MCF 10A (cell line): ENCODE measurements at regions of chr4 and their contacts with region 1.

Region 1: DNA sequence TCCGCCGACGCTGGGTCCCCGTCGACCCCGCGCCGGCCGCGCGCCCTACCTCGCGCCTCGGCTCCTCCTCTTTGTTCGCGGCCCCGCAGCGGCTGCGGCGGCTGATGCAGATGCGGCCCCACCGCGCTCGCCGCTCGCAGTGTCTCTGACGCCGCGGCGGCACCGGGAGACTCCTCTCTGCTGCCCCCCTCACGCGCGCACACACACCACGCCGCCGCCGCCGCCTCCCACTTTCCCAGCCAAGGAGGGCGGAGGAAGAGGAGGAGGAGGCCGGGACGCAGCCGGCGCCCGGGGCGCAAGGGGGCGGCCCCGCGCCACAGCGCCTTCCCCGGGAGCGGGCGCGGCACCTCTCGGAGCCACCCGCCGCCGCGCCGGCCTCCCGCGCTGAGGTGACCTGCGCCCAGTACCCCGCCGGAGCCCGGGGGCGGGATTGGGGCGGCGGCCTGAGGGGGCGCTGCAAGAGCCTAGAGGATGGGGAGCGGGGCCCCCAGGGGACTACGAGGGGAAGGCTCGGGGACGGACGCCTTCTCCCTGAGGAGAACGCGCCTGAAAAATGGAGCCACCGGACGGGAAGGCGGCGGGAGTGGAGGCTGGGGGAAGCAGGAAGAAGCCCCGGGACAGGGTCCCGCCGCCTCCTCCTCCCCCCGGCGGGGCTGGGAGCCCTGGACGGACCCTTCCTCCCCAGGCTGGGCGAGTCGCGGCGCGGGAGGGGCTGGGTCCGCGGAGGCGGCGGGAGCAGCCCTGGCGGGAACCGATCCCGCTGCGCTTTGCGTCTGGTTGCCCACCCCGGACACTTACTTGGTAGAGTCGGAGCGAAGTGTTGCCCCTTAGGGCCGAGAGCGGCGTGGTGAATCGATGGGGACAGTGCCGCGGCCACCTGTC is at the start of gene SH3RF1:
- DNase-seq: peak; percentile 89
- H3K4me3 Mint-ChIP-seq: peak within 1 kb of the TSS; percentile 59
- H3K27ac Mint-ChIP-seq: peak within 1 kb of the TSS; percentile 13
- H3K4me1 Mint-ChIP-seq: peaks cover 27% of the 10 kb centered on the region
- H3K27me3 Mint-ChIP-seq: no peaks in the 10 kb centered on the region
- CTCF ChIP-seq: no peak
- total RNA-seq, gene SH3RF1: 16.5 and 17.4 TPM in 2 replicates

Region 2: GRCh38 chr4:167966143-167966542 is 1304.9 kb before region 1 on chr4:
- CTCF ChIA-PET with region 1: no interaction called
- POLR2A ChIA-PET with region 1: no interaction called
- intact Hi-C with region 1: no loop called
- DNase-seq: no peak
- H3K4me3 Mint-ChIP-seq: no peak overlapping the region
- H3K27ac Mint-ChIP-seq: no peak overlapping the region
- H3K4me1 Mint-ChIP-seq: no peaks in the 10 kb centered on the region
- H3K27me3 Mint-ChIP-seq: no peaks in the 10 kb centered on the region
- CTCF ChIP-seq: no peak

Region 3: DNA sequence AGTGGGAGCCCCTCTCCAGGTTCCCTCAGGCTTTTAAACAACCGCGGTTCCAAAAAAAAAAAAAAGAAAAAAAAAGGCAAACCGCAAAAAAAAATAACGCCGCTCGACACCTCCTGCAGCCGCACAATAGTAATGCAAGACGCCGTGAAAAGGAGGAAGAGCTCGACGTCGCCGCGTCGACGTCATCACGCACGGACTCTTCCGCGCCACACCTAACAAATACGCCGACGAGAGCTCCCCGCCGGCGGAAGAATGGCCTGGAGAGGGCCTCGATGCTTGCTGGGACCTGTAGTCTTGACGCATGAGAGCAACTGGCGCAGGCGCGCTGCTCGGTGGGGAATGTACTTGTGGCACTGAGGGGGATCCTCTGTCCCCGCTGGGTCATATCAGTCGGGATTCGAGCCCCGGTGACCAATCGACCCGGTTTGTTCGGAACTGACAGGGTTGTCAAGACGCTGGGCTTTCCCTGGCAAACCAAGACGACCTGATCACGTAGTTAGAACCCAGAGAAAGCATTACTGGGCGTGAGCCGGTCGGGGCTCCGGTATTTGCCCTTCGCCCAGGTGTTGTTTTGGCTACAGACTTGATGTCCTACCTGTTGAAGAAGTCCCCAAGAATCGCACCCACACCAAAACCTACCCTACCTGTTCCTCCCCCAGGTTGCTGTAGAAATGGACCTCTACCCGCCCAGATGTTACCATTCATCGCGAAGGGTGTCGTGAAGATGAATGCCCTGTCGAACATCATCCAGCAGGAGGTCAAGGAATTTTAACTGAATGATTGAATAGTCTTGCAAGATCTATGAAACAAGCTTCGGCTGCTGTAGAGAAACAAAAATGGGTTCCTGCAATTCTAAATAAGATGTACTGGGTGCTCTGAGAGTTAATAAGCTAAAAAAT is 260.7 kb before region 1 on chr4 and contains the start of gene CBR4:
- CTCF ChIA-PET with region 1: interaction called, 6 read pairs
- POLR2A ChIA-PET with region 1: interaction called, 13 read pairs
- intact Hi-C with region 1: no loop called
- DNase-seq: peak; percentile 98
- H3K4me3 Mint-ChIP-seq: peak within 1 kb of the TSS; percentile 94
- H3K27ac Mint-ChIP-seq: peak within 1 kb of the TSS; percentile 97
- H3K4me1 Mint-ChIP-seq: peaks cover 30% of the 10 kb centered on the region
- H3K27me3 Mint-ChIP-seq: no peaks in the 10 kb centered on the region
- CTCF ChIP-seq: peak; percentile 34
- total RNA-seq, gene CBR4: 19.2 and 24.0 TPM in 2 replicates

Region 4: DNA sequence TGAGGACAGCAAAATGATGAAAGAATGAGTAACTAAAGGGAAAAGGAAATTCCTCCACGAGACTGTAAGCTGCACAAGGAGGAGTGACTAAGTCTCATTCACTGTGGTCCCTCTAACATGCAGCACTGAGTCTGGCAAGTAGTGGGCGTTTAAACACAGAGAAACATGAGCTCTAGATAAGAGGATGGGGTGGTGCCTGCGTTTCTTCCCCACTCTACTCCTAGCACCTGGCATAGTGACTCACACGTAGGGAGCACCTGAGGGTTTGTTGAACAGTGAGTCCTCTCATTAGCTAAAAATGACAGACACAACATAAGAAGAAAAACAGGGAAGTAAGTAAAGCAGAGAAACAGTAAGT is 155.2 kb before region 1 on chr4:
- CTCF ChIA-PET with region 1: no interaction called
- POLR2A ChIA-PET with region 1: no interaction called
- intact Hi-C with region 1: loop called (anchors 1 kb)
- DNase-seq: peak; percentile 87
- H3K4me3 Mint-ChIP-seq: peak overlapping the region; percentile 46
- H3K27ac Mint-ChIP-seq: peak overlapping the region; percentile 77
- H3K4me1 Mint-ChIP-seq: peaks cover 10% of the 10 kb centered on the region
- H3K27me3 Mint-ChIP-seq: no peaks in the 10 kb centered on the region
- CTCF ChIP-seq: no peak

Region 5: GRCh38 chr4:169225058-169225751 is 45.8 kb before region 1 on chr4:
- CTCF ChIA-PET with region 1: interaction called, 4 read pairs
- POLR2A ChIA-PET with region 1: interaction called, 37 read pairs
- intact Hi-C with region 1: loop called (anchors 1 kb)
- DNase-seq: peak; percentile 91
- H3K4me3 Mint-ChIP-seq: no peak overlapping the region
- H3K27ac Mint-ChIP-seq: no peak overlapping the region
- H3K4me1 Mint-ChIP-seq: no peaks in the 10 kb centered on the region
- H3K27me3 Mint-ChIP-seq: no peaks in the 10 kb centered on the region
- CTCF ChIP-seq: no peak

Region 6: GRCh38 chr4:169254546-169254983 is 16.5 kb before region 1 on chr4:
- CTCF ChIA-PET with region 1: interaction called, 7 read pairs
- POLR2A ChIA-PET with region 1: interaction called, 27 read pairs
- intact Hi-C with region 1: no loop called
- DNase-seq: peak; percentile 73
- H3K4me3 Mint-ChIP-seq: peak overlapping the region; percentile 5
- H3K27ac Mint-ChIP-seq: peak overlapping the region; percentile 7
- H3K4me1 Mint-ChIP-seq: peaks cover 54% of the 10 kb centered on the region
- H3K27me3 Mint-ChIP-seq: no peaks in the 10 kb centered on the region
- CTCF ChIP-seq: no peak

Region 7: DNA sequence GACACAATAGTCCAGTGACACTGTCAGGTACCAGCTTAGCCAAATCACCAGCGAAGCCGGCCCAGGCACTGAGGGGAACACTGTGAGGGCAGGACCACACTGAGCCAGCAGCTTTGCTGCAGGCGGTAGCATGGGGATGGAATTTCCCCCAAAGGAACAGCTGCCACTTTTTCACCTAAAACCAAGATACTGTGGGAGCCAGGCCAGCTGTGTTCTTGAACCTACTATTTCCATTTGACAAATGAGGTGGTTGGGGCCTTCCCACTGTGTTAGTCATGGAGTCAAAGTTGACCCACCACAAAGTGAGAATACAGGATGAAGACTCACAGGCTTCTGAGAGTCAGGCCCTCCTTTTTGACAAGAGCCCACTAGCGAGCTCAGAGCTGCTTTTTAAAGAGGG is 70.4 kb after region 1 on chr4:
- CTCF ChIA-PET with region 1: no interaction called
- POLR2A ChIA-PET with region 1: no interaction called
- intact Hi-C with region 1: no loop called
- DNase-seq: no peak
- H3K4me3 Mint-ChIP-seq: no peak overlapping the region
- H3K27ac Mint-ChIP-seq: no peak overlapping the region
- H3K4me1 Mint-ChIP-seq: no peaks in the 10 kb centered on the region
- H3K27me3 Mint-ChIP-seq: no peaks in the 10 kb centered on the region
- CTCF ChIP-seq: no peak

Region 8: DNA sequence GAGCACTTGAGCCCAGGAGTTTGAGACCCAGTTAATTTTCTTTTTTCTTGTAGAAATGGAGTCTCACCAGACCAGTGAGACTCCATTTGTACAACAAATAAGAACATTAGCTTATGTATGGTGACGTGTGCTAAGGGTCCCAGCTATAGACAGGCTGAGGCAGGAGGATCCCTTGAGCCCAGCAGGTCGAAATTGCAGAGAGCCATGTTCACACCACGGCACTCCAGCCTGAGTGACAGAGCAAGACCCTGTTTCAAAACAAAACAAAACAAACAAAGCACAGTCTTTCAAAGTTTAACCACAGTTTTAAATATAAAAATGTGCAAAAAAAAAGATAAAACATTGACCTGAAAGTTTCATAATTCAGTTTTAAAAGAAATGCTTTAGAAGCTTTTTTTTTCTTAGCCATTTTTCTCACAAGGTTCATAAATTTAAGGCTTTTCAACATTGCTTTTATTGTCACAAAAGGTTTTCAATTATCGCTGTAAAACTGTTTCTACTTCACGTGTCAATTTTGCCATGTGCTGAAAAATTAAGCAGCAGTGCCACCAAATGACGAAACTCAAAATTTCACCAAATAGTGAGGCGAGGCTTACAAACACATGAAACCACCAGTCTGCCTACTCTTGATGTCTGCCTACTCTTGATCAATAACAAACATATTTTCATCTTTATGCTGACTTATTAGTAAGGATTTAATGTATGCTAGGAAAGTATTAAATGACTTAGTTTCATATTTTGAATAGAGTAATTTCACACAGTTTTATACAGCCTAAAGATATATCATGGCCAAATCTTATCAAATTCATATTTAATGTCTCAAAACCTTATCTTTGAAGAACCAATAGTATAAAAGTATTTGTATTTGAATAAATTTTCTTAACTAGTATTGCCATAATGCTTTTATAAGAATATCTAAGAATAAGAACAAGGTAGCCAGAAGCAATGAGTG is 215.0 kb after region 1 on chr4:
- CTCF ChIA-PET with region 1: interaction called, 4 read pairs
- POLR2A ChIA-PET with region 1: interaction called, 3 read pairs
- intact Hi-C with region 1: loop called (anchors 1 kb)
- DNase-seq: peak; percentile 66
- H3K4me3 Mint-ChIP-seq: no peak overlapping the region
- H3K27ac Mint-ChIP-seq: peak overlapping the region; percentile 15
- H3K4me1 Mint-ChIP-seq: no peaks in the 10 kb centered on the region
- H3K27me3 Mint-ChIP-seq: no peaks in the 10 kb centered on the region
- CTCF ChIP-seq: peak; percentile 51